CD8-positive, alpha-beta T cell (primary cell): ENCODE measurements at regions of chr11 and their contacts with region 1.

Region 1: DNA sequence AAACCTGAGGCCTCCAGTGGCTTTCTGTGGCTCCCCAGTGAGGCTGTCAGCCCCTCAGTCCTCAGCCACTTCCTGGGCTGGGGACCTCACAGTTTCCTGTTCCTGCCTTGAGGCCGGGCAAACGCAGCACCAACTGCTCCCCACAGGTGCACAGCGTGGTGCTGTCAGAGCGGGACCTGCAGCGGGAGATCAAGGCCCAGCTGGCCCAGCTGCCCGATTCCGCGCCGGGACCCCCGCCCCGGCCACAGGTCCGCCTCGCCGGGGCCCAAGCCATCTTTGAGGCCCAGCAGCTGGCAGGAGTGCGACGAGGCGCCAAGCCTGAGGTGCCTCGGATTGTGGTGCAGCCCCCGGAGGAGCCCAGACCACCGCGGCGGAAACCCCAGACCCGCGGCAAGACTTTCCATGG is 5.4 kb downstream of the TBC1D10C start:
- DNase-seq: peak; percentile 54 to 91 (median 82)
- ATAC-seq: peak; percentile 64
- H3K4me3 ChIP-seq: peak overlapping the region; percentile 66 to 99
- H3K4me3 Mint-ChIP-seq: peak overlapping the region; percentile 95
- H3K27ac ChIP-seq: peak overlapping the region; percentile 69 to 71
- H3K27ac Mint-ChIP-seq: peak overlapping the region; percentile 91
- H3K4me1 ChIP-seq: peaks cover 91% of the 10 kb centered on the region
- H3K4me1 Mint-ChIP-seq: peaks cover 87% of the 10 kb centered on the region
- H3K27me3 ChIP-seq: no peaks in the 10 kb centered on the region
- H3K27me3 Mint-ChIP-seq: no peaks in the 10 kb centered on the region
- CTCF ChIP-seq: no peak

Region 2: DNA sequence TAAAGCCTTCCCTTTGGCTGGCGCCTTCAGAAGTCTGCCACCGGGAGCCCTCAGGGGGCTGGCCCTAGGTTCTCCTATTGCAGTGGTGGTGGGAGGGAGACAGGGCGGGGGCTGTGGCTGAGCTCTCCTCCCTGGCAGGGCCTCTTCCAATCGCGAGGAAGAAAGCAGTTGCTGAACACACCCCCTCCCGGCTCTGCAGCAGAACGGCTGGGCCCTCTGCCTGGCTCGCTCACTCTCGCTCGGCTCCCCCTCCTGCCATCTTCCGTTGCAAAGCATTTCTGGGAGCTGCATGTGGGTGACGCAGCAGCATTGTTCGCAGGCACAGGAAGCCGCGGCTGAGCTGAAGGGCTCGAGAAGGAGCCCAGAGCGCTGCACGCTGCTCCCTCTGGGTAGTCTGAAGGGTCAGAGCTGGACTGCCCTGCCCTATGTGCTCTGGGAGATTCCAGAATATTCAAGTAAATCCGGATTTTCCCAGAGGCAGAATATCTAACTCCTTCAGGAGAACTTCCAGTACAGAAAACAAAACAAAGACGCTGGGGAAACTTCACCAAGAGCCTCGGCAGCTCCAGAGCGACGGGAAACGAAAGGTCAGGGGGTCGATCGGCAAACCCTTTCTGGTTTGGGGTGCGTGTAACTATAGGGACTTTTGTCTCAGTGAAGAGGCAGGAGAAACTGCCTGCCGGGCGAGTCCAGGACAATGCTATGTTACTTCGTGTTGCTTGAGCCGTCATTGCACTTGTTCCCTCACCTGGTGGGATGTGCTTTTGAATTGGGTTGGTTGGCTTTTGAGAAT is 169.3 kb before region 1 on chr11:
- CTCF ChIA-PET with region 1: no interaction called
- POLR2A ChIA-PET with region 1: no interaction called
- intact Hi-C with region 1: no loop called
- DNase-seq: peak; percentile 89 to 99 (median 95)
- ATAC-seq: peak; percentile 89
- H3K4me3 ChIP-seq: peak overlapping the region; percentile 87 to 98
- H3K4me3 Mint-ChIP-seq: peak overlapping the region; percentile 96
- H3K27ac ChIP-seq: peak overlapping the region; percentile 95 to 96
- H3K27ac Mint-ChIP-seq: peak overlapping the region; percentile 100
- H3K4me1 ChIP-seq: peaks cover 40% of the 10 kb centered on the region
- H3K4me1 Mint-ChIP-seq: peaks cover 56% of the 10 kb centered on the region
- H3K27me3 ChIP-seq: no peaks in the 10 kb centered on the region
- H3K27me3 Mint-ChIP-seq: no peaks in the 10 kb centered on the region
- CTCF ChIP-seq: no peak

Region 3: GRCh38 chr11:67317205-67317887 is 91.9 kb before region 1 on chr11:
- CTCF ChIA-PET with region 1: no interaction called
- POLR2A ChIA-PET with region 1: no interaction called
- intact Hi-C with region 1: no loop called
- DNase-seq: peak; percentile 96 to 99 (median 98)
- ATAC-seq: peak; percentile 76
- H3K4me3 ChIP-seq: peak overlapping the region; percentile 68 to 82
- H3K4me3 Mint-ChIP-seq: peak overlapping the region; percentile 97
- H3K27ac ChIP-seq: peak overlapping the region; percentile 63 to 73
- H3K27ac Mint-ChIP-seq: peak overlapping the region; percentile 94
- H3K4me1 ChIP-seq: peaks cover 23% of the 10 kb centered on the region
- H3K4me1 Mint-ChIP-seq: peaks cover 32% of the 10 kb centered on the region
- H3K27me3 ChIP-seq: no peaks in the 10 kb centered on the region
- H3K27me3 Mint-ChIP-seq: no peaks in the 10 kb centered on the region
- CTCF ChIP-seq: peak; percentile 70

Region 4: GRCh38 chr11:67420646-67421420 is 11.6 kb after region 1 on chr11:
- CTCF ChIA-PET with region 1: interaction called, 62 read pairs
- POLR2A ChIA-PET with region 1: interaction called, 275 read pairs
- intact Hi-C with region 1: loop called (anchors 1 kb)
- DNase-seq: peak; percentile 97 to 100 (median 99)
- ATAC-seq: peak; percentile 85
- H3K4me3 ChIP-seq: peak overlapping the region; percentile 49 to 50
- H3K4me3 Mint-ChIP-seq: peak overlapping the region; percentile 86
- H3K27ac ChIP-seq: peak overlapping the region; percentile 55 to 68
- H3K27ac Mint-ChIP-seq: peak overlapping the region; percentile 91
- H3K4me1 ChIP-seq: peaks cover 50% of the 10 kb centered on the region
- H3K4me1 Mint-ChIP-seq: peaks cover 47% of the 10 kb centered on the region
- H3K27me3 ChIP-seq: no peaks in the 10 kb centered on the region
- H3K27me3 Mint-ChIP-seq: no peaks in the 10 kb centered on the region
- CTCF ChIP-seq: no peak

Region 5: GRCh38 chr11:67428052-67428914 is 19.0 kb after region 1 on chr11 and contains the start of gene RPS6KB2:
- CTCF ChIA-PET with region 1: interaction called, 4 read pairs
- POLR2A ChIA-PET with region 1: interaction called, 317 read pairs
- intact Hi-C with region 1: no loop called
- DNase-seq: peak; percentile 97 to 100 (median 98)
- ATAC-seq: peak; percentile 89
- H3K4me3 ChIP-seq: peak within 1 kb of the TSS; percentile 67 to 73
- H3K4me3 Mint-ChIP-seq: peak within 1 kb of the TSS; percentile 99
- H3K27ac ChIP-seq: peak within 1 kb of the TSS; percentile 86 to 87
- H3K27ac Mint-ChIP-seq: peak within 1 kb of the TSS; percentile 95
- H3K4me1 ChIP-seq: peaks cover 34% of the 10 kb centered on the region
- H3K4me1 Mint-ChIP-seq: peaks cover 41% of the 10 kb centered on the region
- H3K27me3 ChIP-seq: no peaks in the 10 kb centered on the region
- H3K27me3 Mint-ChIP-seq: no peaks in the 10 kb centered on the region
- CTCF ChIP-seq: no peak
- total RNA-seq, gene RPS6KB2: 71.8 to 76.2 TPM

Region 6: GRCh38 chr11:68956142-68956541 is 1546.9 kb after region 1 on chr11:
- CTCF ChIA-PET with region 1: no interaction called
- POLR2A ChIA-PET with region 1: no interaction called
- intact Hi-C with region 1: no loop called
- DNase-seq: peak in 5 of 9 experiments; percentile 9 to 51 (median 41)
- ATAC-seq: peak; percentile 44
- H3K4me3 ChIP-seq: no peak overlapping the region
- H3K4me3 Mint-ChIP-seq: no peak overlapping the region
- H3K27ac ChIP-seq: no peak overlapping the region
- H3K27ac Mint-ChIP-seq: no peak overlapping the region
- H3K4me1 ChIP-seq: no peaks in the 10 kb centered on the region
- H3K4me1 Mint-ChIP-seq: peaks cover 3% of the 10 kb centered on the region
- H3K27me3 ChIP-seq: no peaks in the 10 kb centered on the region
- H3K27me3 Mint-ChIP-seq: peaks cover 4% of the 10 kb centered on the region
- CTCF ChIP-seq: no peak